ENCODE measurements at regions of chr20 and their contacts with region 1.

Region 1: DNA sequence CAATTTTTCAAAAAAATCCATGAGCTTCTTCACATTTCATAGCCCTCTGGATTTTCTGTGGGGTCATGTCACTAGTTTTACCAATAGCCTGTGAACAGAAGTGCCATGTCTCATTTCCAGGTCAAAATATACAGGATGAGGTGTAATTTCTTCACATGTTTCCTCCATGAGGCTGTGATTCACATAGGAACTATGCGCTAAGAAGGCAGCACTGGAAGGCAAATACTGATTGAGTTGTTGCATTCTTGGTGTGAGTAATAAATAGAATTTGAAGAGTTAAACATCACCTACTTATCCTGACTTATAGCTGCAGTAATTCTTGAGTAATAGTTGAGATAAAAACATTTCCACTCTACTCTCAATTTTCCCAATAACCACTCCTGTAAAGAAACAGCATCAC is 442.3 kb downstream of the HAO1 start:
- DNase-seq: peak; percentile 92
- H3K4me3 ChIP-seq: no peak overlapping the region
- H3K27ac ChIP-seq: peak overlapping the region; percentile 78
- H3K4me1 ChIP-seq: peaks cover 28% of the 10 kb centered on the region
- H3K27me3 ChIP-seq: no peaks in the 10 kb centered on the region
- CTCF ChIP-seq: no peak

Region 2: DNA sequence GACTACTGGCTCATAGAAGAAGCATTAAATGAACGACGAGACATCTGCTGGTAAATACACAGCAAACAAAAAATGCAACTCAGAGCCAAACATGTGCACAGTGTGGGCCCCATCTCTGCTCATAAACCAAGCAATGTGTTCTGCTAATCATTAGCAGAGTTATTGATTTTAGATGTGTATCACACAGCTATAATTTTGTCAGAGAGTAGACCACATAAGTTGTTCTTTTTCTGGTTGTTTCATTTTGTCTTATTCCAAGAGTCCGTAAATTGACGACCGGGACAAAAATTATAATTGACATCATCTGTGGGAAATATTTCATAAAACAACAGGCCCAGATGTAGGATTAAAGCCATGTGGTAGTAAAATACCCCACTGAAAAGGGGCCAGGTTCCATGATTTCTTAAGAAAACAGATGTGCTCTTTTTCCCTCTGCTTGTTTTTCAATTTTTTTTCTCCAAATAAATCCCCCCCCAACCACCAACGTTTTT is 18.7 kb after region 1 on chr20:
- CTCF ChIA-PET with region 1: no interaction called
- dilution Hi-C with region 1: no loop called
- in situ Hi-C with region 1: no loop called
- intact Hi-C with region 1: no loop called
- DNase-seq: no peak
- H3K4me3 ChIP-seq: no peak overlapping the region
- H3K27ac ChIP-seq: no peak overlapping the region
- H3K4me1 ChIP-seq: peaks cover 13% of the 10 kb centered on the region
- H3K27me3 ChIP-seq: no peaks in the 10 kb centered on the region
- CTCF ChIP-seq: no peak

Region 3: DNA sequence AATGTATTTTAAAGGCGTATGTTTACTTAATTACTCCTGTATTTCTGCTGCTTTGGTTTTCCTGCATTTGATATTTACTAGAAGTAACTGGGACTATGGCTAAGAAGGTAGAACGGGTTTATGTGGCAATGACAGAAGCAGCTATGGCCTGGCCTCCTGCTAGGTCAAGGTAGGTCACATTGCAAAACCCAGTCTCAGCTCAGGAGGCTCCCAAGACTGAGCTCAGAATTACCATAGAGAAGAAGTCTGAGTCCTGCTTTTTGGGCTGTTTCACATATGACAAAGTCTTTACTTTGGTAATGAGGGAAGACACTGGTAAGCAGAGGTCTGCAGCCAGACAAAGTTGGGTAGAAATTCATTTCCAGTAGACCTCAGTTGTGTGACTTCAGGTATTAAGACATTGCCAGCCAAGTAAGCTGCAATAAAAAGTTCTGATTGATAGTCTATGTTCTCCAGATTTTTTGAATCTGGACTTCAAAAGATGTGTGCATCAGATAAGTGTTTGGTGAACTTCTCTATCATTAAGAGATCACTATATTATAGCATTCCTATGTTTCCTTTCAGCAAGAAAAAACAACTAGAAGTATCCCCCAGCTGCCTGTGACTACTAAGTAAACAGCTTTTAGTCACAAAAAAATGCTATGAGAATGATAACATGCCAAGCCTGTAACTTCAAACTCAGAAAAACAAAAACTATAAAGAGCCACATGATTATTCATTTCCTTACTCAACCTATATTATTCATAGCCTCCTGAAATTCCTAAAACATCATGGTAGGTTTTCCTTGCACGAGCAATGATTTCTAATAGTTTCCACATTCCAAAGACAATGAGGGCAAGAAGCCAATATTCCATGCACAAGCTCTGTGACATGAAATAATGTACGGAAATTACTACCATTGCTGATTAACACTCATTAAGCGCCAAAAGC is 130.0 kb after region 1 on chr20:
- CTCF ChIA-PET with region 1: no interaction called
- dilution Hi-C with region 1: no loop called
- in situ Hi-C with region 1: no loop called
- intact Hi-C with region 1: loop called (anchors 5 kb)
- DNase-seq: peak; percentile 68
- H3K4me3 ChIP-seq: no peak overlapping the region
- H3K27ac ChIP-seq: peak overlapping the region; percentile 86
- H3K4me1 ChIP-seq: peaks cover 35% of the 10 kb centered on the region
- H3K27me3 ChIP-seq: no peaks in the 10 kb centered on the region
- CTCF ChIP-seq: no peak

Region 4: DNA sequence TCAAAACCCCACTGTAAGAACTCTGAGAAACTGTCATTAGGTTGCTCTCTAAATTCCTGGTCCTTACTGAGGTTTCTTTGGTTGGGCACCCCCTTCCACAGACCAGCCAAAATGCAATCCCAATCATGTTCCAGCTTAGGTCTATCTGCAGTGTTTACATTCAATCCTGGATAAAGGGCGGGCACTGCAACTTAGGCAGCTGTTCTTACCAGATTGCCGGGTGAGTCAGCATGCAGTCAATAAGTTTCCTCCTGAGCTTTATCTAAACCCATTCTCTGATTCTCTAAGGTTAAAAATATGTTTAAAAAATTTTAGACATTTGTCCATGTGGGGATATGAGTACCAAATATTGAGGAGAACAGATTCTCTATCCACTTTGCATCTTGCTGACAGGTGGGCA is 244.5 kb after region 1 on chr20:
- CTCF ChIA-PET with region 1: no interaction called
- dilution Hi-C with region 1: no loop called
- in situ Hi-C with region 1: no loop called
- intact Hi-C with region 1: loop called (anchors 2 kb)
- DNase-seq: peak; percentile 63
- H3K4me3 ChIP-seq: no peak overlapping the region
- H3K27ac ChIP-seq: no peak overlapping the region
- H3K4me1 ChIP-seq: peaks cover 44% of the 10 kb centered on the region
- H3K27me3 ChIP-seq: no peaks in the 10 kb centered on the region
- CTCF ChIP-seq: no peak

Measured in mammary epithelial cell (primary cell).